ENCODE measurements at regions of chr4 and their contacts with region 1.

Region 1: GRCh38 chr4:140743194-140743931 is 12.8 kb downstream of the TBC1D9 start:
- DNase-seq: peak in 1 of 2 donors; percentile 42
- H3K4me3 ChIP-seq: peak overlapping the region in 1 of 3 donors; percentile 3
- H3K27ac ChIP-seq: peak overlapping the region; percentile 60 to 69
- H3K4me1 ChIP-seq: peaks cover 0 to 9% of the 10 kb centered on the region in 2 donors
- H3K27me3 ChIP-seq: no peaks in the 10 kb centered on the region
- CTCF ChIP-seq: peak in 1 of 3 donors; percentile 9
- POLR2A ChIP-seq: no peak

Region 2: DNA sequence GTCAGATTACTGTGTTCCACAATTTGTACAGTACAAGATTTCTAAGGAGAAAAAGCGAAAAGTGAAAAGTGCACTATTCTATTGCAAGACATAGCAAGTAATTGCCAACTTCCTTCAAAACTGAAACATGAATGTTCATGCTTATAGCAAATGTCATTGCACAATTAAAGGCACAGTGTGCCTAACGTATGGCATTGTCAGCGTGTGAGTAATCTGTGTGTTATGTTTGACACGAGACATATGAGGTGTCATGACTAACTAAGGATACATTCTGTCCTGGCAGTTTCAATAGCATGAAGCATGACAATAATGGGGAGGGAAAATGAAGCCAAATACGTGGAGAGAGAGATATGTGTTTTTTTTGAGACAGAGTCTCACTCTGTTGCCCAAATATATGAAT is 46.4 kb after region 1 on chr4:
- intact Hi-C with region 1: loop called (anchors 2 kb)
- DNase-seq: no peak
- H3K4me3 ChIP-seq: no peak overlapping the region
- H3K27ac ChIP-seq: no peak overlapping the region
- H3K4me1 ChIP-seq: no peaks in the 10 kb centered on the region
- H3K27me3 ChIP-seq: no peaks in the 10 kb centered on the region
- CTCF ChIP-seq: no peak
- POLR2A ChIP-seq: no peak

Region 3: GRCh38 chr4:141497627-141498026 is 754.3 kb after region 1 on chr4:
- intact Hi-C with region 1: no loop called
- DNase-seq: no peak
- H3K4me3 ChIP-seq: no peak overlapping the region
- H3K27ac ChIP-seq: no peak overlapping the region
- H3K4me1 ChIP-seq: no peaks in the 10 kb centered on the region
- H3K27me3 ChIP-seq: no peaks in the 10 kb centered on the region
- CTCF ChIP-seq: no peak
- POLR2A ChIP-seq: no peak

Region 4: GRCh38 chr4:141660880-141661279 is 917.5 kb after region 1 on chr4:
- intact Hi-C with region 1: loop called (anchors 5 kb)
- DNase-seq: no peak
- H3K4me3 ChIP-seq: no peak overlapping the region
- H3K27ac ChIP-seq: no peak overlapping the region
- H3K4me1 ChIP-seq: no peaks in the 10 kb centered on the region
- H3K27me3 ChIP-seq: no peaks in the 10 kb centered on the region
- CTCF ChIP-seq: no peak
- POLR2A ChIP-seq: no peak